CD4-positive, alpha-beta T cell (primary cell): ENCODE measurements at regions of chr17 and their contacts with region 1.

Region 1: GRCh38 chr17:82292251-82293154 is 19.0 kb upstream of the CSNK1D start:
- DNase-seq: peak; percentile 79 to 97 (median 90)
- ATAC-seq: peak; percentile 87
- H3K4me3 ChIP-seq: peak overlapping the region; percentile 68
- H3K4me3 Mint-ChIP-seq: peak overlapping the region; percentile 93
- H3K27ac ChIP-seq: peak overlapping the region; percentile 93 to 98
- H3K27ac Mint-ChIP-seq: peak overlapping the region; percentile 95
- H3K4me1 ChIP-seq: peaks cover 36% of the 10 kb centered on the region
- H3K4me1 Mint-ChIP-seq: peaks cover 51% of the 10 kb centered on the region
- H3K27me3 ChIP-seq: no peaks in the 10 kb centered on the region
- H3K27me3 Mint-ChIP-seq: no peaks in the 10 kb centered on the region
- CTCF ChIP-seq: no peak

Region 2: DNA sequence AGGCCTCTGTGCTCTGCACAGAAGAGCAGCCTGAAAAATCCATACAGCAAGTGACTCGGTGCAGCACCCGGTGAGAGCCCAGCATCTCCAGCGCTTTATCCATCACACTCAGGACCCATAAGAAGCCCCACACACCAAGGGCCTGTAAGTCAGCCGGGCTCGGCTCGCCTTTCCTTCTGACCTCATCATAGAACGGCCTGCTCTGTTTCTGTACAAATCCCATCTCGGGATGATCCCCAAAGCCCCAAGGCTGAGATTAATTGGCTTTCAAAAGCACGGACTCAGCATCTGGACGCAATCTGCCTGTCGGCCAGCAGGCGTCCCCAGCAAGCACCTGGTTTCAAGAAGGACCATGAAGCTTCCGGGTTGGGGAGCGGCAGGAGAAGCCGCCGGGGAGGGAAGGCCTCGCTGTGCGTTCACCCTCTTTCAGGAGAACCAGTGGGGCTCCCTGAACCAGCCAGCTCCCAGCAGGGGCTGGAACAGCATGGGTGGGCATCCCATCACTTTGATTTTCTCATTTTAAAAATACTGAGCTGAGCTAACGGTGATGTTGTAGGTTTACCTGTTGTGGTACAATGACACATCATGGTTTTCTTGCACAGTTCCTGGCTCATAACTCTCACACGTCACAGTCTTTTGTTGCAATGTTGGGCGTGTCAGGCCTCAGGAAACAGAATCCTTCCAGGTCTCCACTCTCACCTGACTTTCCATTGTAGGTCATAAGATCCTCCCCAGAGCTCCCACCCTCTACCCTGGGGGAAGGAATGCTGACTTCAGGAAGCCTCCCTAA is 86.6 kb before region 1 on chr17:
- CTCF ChIA-PET with region 1: interaction called, 8 read pairs
- POLR2A ChIA-PET with region 1: interaction called, 23 read pairs
- intact Hi-C with region 1: loop called in 1 of 2 experiments (anchors 10 kb)
- DNase-seq: peak; percentile 60 to 91 (median 77)
- ATAC-seq: peak; percentile 86
- H3K4me3 ChIP-seq: peak overlapping the region; percentile 16
- H3K4me3 Mint-ChIP-seq: peak overlapping the region; percentile 23
- H3K27ac ChIP-seq: peak overlapping the region; percentile 77 to 79
- H3K27ac Mint-ChIP-seq: peak overlapping the region; percentile 95
- H3K4me1 ChIP-seq: peaks cover 25% of the 10 kb centered on the region
- H3K4me1 Mint-ChIP-seq: peaks cover 50% of the 10 kb centered on the region
- H3K27me3 ChIP-seq: no peaks in the 10 kb centered on the region
- H3K27me3 Mint-ChIP-seq: no peaks in the 10 kb centered on the region
- CTCF ChIP-seq: peak; percentile 92

Region 3: GRCh38 chr17:82230627-82231311 is 61.7 kb before region 1 on chr17:
- CTCF ChIA-PET with region 1: interaction called, 7 read pairs
- POLR2A ChIA-PET with region 1: interaction called, 21 read pairs
- intact Hi-C with region 1: loop called in 1 of 2 experiments (anchors 10 kb)
- DNase-seq: peak in 7 of 14 experiments; percentile 39 to 79 (median 57)
- ATAC-seq: peak; percentile 24
- H3K4me3 ChIP-seq: peak overlapping the region; percentile 48
- H3K4me3 Mint-ChIP-seq: no peak overlapping the region
- H3K27ac ChIP-seq: peak overlapping the region in 1 of 2 donors; percentile 38
- H3K27ac Mint-ChIP-seq: peak overlapping the region; percentile 84
- H3K4me1 ChIP-seq: peaks cover 54% of the 10 kb centered on the region
- H3K4me1 Mint-ChIP-seq: peaks cover 21% of the 10 kb centered on the region
- H3K27me3 ChIP-seq: no peaks in the 10 kb centered on the region
- H3K27me3 Mint-ChIP-seq: no peaks in the 10 kb centered on the region
- CTCF ChIP-seq: no peak

Region 4: GRCh38 chr17:82273327-82274133 is 19.0 kb before region 1 on chr17 and contains the start of gene CSNK1D:
- CTCF ChIA-PET with region 1: no interaction called
- POLR2A ChIA-PET with region 1: interaction called, 41 read pairs
- intact Hi-C with region 1: loop called in 1 of 2 experiments (anchors 1 kb)
- DNase-seq: peak; percentile 84 to 95 (median 92)
- ATAC-seq: peak; percentile 79
- H3K4me3 ChIP-seq: peak within 1 kb of the TSS; percentile 75
- H3K4me3 Mint-ChIP-seq: peak within 1 kb of the TSS; percentile 98
- H3K27ac ChIP-seq: peak within 1 kb of the TSS; percentile 70 to 78
- H3K27ac Mint-ChIP-seq: peak within 1 kb of the TSS; percentile 99
- H3K4me1 ChIP-seq: peaks cover 50% of the 10 kb centered on the region
- H3K4me1 Mint-ChIP-seq: peaks cover 39% of the 10 kb centered on the region
- H3K27me3 ChIP-seq: no peaks in the 10 kb centered on the region
- H3K27me3 Mint-ChIP-seq: no peaks in the 10 kb centered on the region
- CTCF ChIP-seq: no peak
- total RNA-seq, gene CSNK1D: 277 to 286 TPM

Region 5: GRCh38 chr17:82315703-82316358 is 23.3 kb after region 1 on chr17:
- CTCF ChIA-PET with region 1: interaction called, 6 read pairs
- POLR2A ChIA-PET with region 1: interaction called, 157 read pairs
- intact Hi-C with region 1: no loop called
- DNase-seq: peak in 11 of 14 experiments; percentile 43 to 78 (median 68)
- ATAC-seq: peak; percentile 45
- H3K4me3 ChIP-seq: peak overlapping the region; percentile 81
- H3K4me3 Mint-ChIP-seq: peak overlapping the region; percentile 99
- H3K27ac ChIP-seq: peak overlapping the region; percentile 31 to 80
- H3K27ac Mint-ChIP-seq: no peak overlapping the region
- H3K4me1 ChIP-seq: peaks cover 58% of the 10 kb centered on the region
- H3K4me1 Mint-ChIP-seq: peaks cover 25% of the 10 kb centered on the region
- H3K27me3 ChIP-seq: no peaks in the 10 kb centered on the region
- H3K27me3 Mint-ChIP-seq: no peaks in the 10 kb centered on the region
- CTCF ChIP-seq: no peak

Region 6: DNA sequence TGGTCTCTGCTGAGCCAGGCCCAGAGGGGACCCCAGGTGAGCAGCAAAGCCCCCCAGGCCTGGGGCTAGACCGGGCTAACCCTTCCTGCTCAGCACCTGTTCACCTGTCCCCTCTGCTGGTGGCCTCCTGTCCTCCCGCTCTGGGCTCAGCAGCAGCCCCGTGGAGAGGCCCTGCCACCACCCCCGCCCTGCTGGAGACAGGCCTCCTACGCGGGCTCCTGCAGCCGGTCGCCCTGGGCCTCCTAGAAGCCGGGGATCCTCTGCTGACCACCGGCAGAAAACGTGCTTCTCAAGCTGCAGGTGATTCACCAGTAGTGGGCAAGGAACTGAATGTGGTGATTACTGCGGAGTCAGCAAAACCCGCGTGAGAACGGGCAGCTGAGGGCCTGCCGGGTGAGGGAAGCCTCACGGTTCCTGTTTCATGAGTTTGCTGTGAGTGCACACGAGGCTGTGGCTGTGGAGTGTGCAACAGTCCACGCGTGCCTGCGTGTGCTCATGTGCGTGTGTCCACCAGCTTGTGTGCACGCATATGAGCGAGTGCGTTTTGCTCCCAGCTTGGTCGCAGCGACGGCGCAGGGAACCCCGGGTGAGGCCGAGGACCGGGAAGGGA is 40.3 kb after region 1 on chr17:
- CTCF ChIA-PET with region 1: no interaction called
- POLR2A ChIA-PET with region 1: interaction called, 33 read pairs
- intact Hi-C with region 1: loop called in 1 of 2 experiments (anchors 5 kb)
- DNase-seq: peak in 6 of 14 experiments; percentile 20 to 77 (median 40)
- ATAC-seq: peak; percentile 57
- H3K4me3 ChIP-seq: peak overlapping the region; percentile 63
- H3K4me3 Mint-ChIP-seq: peak overlapping the region; percentile 93
- H3K27ac ChIP-seq: no peak overlapping the region
- H3K27ac Mint-ChIP-seq: peak overlapping the region; percentile 57
- H3K4me1 ChIP-seq: peaks cover 39% of the 10 kb centered on the region
- H3K4me1 Mint-ChIP-seq: peaks cover 13% of the 10 kb centered on the region
- H3K27me3 ChIP-seq: peaks cover 0 to 8% of the 10 kb centered on the region in 2 experiments
- H3K27me3 Mint-ChIP-seq: peaks cover 4% of the 10 kb centered on the region
- CTCF ChIP-seq: no peak